Adrenal gland (tissue), 19 donors: ENCODE measurements at regions of chr9 and their contacts with region 1.

Region 1: GRCh38 chr9:127742435-127743088 is 7.5 kb upstream of the TOR2A start:
- DNase-seq: peak in 6 of 7 donors; percentile 46 to 87 (median 52)
- H3K4me3 ChIP-seq: peak overlapping the region in 2 of 4 donors; percentile 4 to 48
- H3K27ac ChIP-seq: peak overlapping the region in 2 of 5 donors; percentile 65 to 77
- H3K4me1 ChIP-seq: peaks cover 0 to 21% of the 10 kb centered on the region in 2 donors
- H3K27me3 ChIP-seq: no peaks in the 10 kb centered on the region
- CTCF ChIP-seq: no peak
- POLR2A ChIP-seq: no peak

Region 2: GRCh38 chr9:127783111-127784008 is 40.8 kb after region 1 on chr9:
- intact Hi-C with region 1: loop called (anchors 5 kb)
- DNase-seq: peak in 2 of 7 donors; percentile 37 to 56
- H3K4me3 ChIP-seq: no peak overlapping the region
- H3K27ac ChIP-seq: peak overlapping the region in 3 of 5 donors; percentile 28 to 99 (median 31)
- H3K4me1 ChIP-seq: peaks cover 5 to 24% of the 10 kb centered on the region in 2 donors
- H3K27me3 ChIP-seq: no peaks in the 10 kb centered on the region
- CTCF ChIP-seq: no peak
- POLR2A ChIP-seq: no peak

Region 3: GRCh38 chr9:127869310-127870152 is 127.0 kb after region 1 on chr9:
- intact Hi-C with region 1: loop called in 1 of 2 experiments (anchors 5 kb)
- DNase-seq: peak; percentile 88 to 94 (median 90)
- H3K4me3 ChIP-seq: no peak overlapping the region
- H3K27ac ChIP-seq: peak overlapping the region in 1 of 5 donors; percentile 54
- H3K4me1 ChIP-seq: peaks cover 7 to 11% of the 10 kb centered on the region in 2 donors
- H3K27me3 ChIP-seq: no peaks in the 10 kb centered on the region
- CTCF ChIP-seq: peak; percentile 71 to 98 (median 93)
- POLR2A ChIP-seq: no peak